ENCODE measurements at regions of chr16 and their contacts with region 1.

Region 1: GRCh38 chr16:87982491-87983415 is 31.5 kb downstream of the BANP start:
- DNase-seq: no peak
- H3K4me3 ChIP-seq: no peak overlapping the region
- H3K27ac ChIP-seq: no peak overlapping the region
- H3K4me1 ChIP-seq: no peaks in the 10 kb centered on the region
- H3K27me3 ChIP-seq: no peaks in the 10 kb centered on the region
- CTCF ChIP-seq: no peak
- EP300 ChIP-seq: no peak
- POLR2A ChIP-seq: no peak
- RAD21 ChIP-seq: no peak

Region 2: DNA sequence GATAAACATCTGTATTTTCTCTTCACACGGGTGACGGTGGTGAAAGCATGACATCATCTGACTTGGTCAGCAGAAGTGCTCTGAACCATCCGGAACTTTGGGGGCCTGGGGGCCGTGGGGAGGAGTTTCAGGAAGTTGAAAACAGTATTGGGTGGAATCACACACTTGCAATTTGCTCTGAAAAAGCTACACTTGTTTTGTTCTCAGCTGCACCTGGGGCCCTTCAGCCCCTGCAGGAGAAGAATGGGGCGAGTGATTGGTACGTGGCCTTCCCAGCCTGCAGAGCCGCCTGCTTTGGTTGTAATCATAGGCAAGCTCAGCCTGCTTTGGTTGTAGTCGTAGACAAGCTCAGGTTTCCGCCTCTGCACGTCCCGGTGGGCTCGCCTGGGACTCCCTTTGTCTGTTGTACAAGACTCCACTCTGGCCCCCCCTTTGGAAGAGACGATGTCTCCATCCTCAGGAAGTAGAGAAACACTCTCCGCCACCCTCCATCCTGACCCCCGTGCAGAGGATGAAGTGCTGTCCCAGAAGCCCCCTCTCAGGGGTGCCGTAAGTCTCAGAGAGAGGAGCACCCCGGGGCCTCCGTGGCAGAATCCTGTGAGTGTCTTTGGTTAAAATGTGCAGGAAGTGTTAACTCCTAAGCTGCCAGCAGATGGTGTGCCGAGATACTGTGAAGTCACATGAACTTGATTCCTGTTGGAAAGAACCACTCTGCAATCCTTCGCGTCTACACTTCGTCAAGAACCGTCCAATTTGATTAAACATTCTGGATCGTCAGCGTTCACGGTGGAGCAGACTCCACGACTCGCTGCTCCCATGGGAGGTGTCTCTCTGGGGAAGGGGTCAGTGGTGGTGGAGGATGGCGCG is 26.2 kb before region 1 on chr16:
- CTCF ChIA-PET with region 1: interaction called, 10 read pairs
- POLR2A ChIA-PET with region 1: interaction called, 3 read pairs
- DNase-seq: no peak
- H3K4me3 ChIP-seq: no peak overlapping the region
- H3K27ac ChIP-seq: peak overlapping the region; percentile 27; the same call in 1 of the 2 replicates
- H3K4me1 ChIP-seq: peaks cover 0 to 5% (median 2%) of the 10 kb centered on the region in 4 experiments; a peak in 3 of 7 replicates
- H3K27me3 ChIP-seq: no peaks in the 10 kb centered on the region
- CTCF ChIP-seq: peak in 2 of 3 experiments; percentile 42 to 46; a peak in 3 of 4 replicates
- EP300 ChIP-seq: no peak
- POLR2A ChIP-seq: no peak
- RAD21 ChIP-seq: peak; percentile 41 to 44

Region 3: GRCh38 chr16:88005181-88005581 is 22.4 kb after region 1 on chr16:
- CTCF ChIA-PET with region 1: interaction called, 27 read pairs
- POLR2A ChIA-PET with region 1: no interaction called
- DNase-seq: peak in 1 of 2 experiments; percentile 70
- H3K4me3 ChIP-seq: no peak overlapping the region
- H3K27ac ChIP-seq: no peak overlapping the region
- H3K4me1 ChIP-seq: peaks cover 0 to 8% (median 2%) of the 10 kb centered on the region in 4 experiments; a peak in 3 of 7 replicates
- H3K27me3 ChIP-seq: no peaks in the 10 kb centered on the region
- CTCF ChIP-seq: peak; percentile 76 to 91 (median 85)
- EP300 ChIP-seq: no peak
- POLR2A ChIP-seq: no peak
- RAD21 ChIP-seq: peak; percentile 76 to 82

Region 4: DNA sequence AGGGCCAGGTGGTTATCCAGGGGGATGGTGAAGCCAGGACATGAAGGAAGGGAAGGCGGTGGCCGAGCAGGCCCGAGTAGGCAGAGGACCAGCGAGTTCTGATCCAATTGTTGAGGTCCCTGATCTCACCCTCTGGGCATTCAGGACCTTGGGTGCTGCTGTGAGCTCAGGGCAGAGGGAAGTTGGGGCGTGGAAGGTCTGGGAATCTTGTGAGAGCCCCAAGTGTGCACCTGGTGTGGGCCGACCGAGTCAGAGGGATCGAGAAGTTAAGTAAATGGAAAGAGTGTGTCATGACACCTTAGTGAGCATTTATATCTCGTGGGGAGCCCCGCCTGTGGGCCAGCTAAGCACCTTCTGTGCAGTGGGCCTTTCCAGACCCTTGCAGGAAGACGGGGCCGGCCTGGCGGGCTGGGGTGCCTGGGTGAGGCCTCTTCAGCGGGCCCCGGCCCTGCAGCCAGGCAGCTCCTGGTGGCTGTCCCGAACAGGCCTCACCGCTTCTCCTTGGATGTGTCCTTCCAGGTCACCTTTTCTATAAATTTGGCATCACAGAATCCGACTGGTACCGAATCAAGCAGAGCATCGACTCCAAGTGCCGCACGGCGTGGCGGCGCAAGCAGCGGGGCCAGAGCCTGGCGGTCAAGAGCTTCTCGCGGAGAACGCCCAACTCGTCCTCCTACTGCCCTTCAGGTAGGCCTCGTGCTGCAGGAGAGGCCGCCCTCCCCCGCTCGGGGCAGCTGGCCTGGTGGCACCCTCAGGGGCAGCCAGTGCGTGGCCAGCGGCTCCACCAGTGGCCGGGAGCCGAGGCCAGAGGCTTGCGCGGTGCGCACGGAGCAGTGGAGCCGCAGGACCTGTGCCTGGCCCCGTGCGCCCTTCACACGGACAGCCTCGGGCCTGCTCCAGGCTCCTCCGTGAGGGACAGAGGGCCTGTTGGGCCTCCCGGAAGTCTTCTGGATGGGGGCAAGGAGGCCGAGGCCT is 44.5 kb after region 1 on chr16:
- CTCF ChIA-PET with region 1: no interaction called
- POLR2A ChIA-PET with region 1: no interaction called
- DNase-seq: no peak
- H3K4me3 ChIP-seq: no peak overlapping the region
- H3K27ac ChIP-seq: no peak overlapping the region
- H3K4me1 ChIP-seq: peaks cover 0 to 4% (median 0%) of the 10 kb centered on the region in 4 experiments; a peak in 3 of 7 replicates
- H3K27me3 ChIP-seq: no peaks in the 10 kb centered on the region
- CTCF ChIP-seq: no peak
- EP300 ChIP-seq: no peak
- POLR2A ChIP-seq: no peak
- RAD21 ChIP-seq: no peak

Region 5: GRCh38 chr16:88200896-88201185 is 218.1 kb after region 1 on chr16:
- CTCF ChIA-PET with region 1: no interaction called
- POLR2A ChIA-PET with region 1: no interaction called
- DNase-seq: no peak
- H3K4me3 ChIP-seq: no peak overlapping the region
- H3K27ac ChIP-seq: no peak overlapping the region
- H3K4me1 ChIP-seq: no peaks in the 10 kb centered on the region; a peak in 1 of 7 replicates
- H3K27me3 ChIP-seq: no peaks in the 10 kb centered on the region
- CTCF ChIP-seq: no peak
- EP300 ChIP-seq: no peak
- POLR2A ChIP-seq: no peak
- RAD21 ChIP-seq: no peak

Measured in H1 (cell line).